ENCODE measurements at regions of chr20 and their contacts with region 1.

Region 1: DNA sequence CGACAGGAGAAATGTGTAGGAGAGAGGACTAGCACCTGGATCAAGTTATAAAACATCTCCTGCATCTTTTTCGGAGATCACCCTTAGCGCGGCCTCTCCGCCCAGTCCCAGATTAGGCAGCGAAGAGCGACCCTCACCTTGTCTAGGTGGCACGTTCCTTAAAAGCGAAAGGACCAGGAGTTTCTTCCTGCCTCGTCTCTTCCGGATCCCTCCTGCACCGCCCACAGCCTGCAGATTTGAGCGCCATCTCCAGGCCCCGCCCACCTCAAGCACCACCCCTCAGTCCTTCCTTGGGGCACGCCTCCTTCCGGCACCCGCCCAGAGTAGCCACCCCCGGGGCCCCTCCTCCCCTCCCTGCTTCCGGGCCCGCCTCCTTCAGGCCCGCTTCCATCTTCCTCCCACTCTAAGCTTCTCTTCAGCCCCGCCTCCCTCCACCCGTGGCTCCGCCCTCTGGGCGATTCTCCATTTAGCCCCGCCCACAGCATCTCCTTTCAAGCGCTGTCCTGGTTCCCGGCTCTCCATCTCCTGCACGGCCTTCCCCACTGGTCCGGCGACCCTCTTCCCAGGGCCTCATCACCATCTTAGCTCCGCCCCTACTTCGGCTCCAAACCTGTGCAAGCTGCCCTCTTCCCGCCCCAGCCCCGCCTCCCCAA is 662 bp upstream of the RALY start:
- DNase-seq: peak; percentile 99 to 100 (median 99)
- ATAC-seq: peak; percentile 82
- H3K4me3 ChIP-seq: peak overlapping the region; percentile 97
- H3K4me3 Mint-ChIP-seq: peak overlapping the region; percentile 100
- H3K27ac ChIP-seq: peak overlapping the region; percentile 91 to 92
- H3K27ac Mint-ChIP-seq: peak overlapping the region; percentile 99
- H3K4me1 ChIP-seq: peaks cover 51% of the 10 kb centered on the region
- H3K4me1 Mint-ChIP-seq: peaks cover 68% of the 10 kb centered on the region
- H3K27me3 ChIP-seq: no peaks in the 10 kb centered on the region
- H3K27me3 Mint-ChIP-seq: no peaks in the 10 kb centered on the region
- CTCF ChIP-seq: no peak

Region 2: DNA sequence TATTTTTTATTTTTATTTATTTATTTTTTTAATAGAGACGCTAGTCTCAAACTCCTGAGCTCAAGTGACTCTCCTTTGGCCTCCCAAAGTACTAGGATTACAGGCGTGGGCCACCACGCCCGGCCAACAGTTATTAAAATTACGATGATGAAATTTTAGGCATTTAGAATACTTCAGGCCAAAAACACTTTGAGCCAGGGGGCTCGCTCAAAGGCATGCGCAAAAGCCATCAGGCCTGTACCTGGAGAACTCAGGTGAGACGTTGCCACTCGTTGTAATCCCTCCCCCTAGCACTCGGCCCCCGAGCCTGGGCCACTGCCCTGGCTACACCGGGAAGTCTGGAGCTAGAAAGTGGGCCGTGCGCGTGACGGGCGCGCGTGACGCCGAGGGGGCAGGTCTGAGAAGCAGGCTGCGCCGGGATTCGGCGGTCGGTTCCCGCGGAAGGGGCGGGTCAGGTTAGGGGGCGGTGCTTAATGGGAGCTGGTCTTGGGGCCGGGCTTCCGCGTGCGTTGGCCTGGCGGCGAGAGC is 503.5 kb before region 1 on chr20:
- CTCF ChIA-PET with region 1: no interaction called
- POLR2A ChIA-PET with region 1: interaction called, 19 read pairs
- intact Hi-C with region 1: loop called in 1 of 2 experiments (anchors 5 kb)
- DNase-seq: peak; percentile 97 to 100 (median 99)
- ATAC-seq: peak; percentile 96
- H3K4me3 ChIP-seq: peak overlapping the region; percentile 57
- H3K4me3 Mint-ChIP-seq: peak overlapping the region; percentile 94
- H3K27ac ChIP-seq: peak overlapping the region; percentile 92 to 95
- H3K27ac Mint-ChIP-seq: peak overlapping the region; percentile 96
- H3K4me1 ChIP-seq: peaks cover 26% of the 10 kb centered on the region
- H3K4me1 Mint-ChIP-seq: peaks cover 36% of the 10 kb centered on the region
- H3K27me3 ChIP-seq: no peaks in the 10 kb centered on the region
- H3K27me3 Mint-ChIP-seq: no peaks in the 10 kb centered on the region
- CTCF ChIP-seq: no peak

Region 3: GRCh38 chr20:33731693-33732165 is 261.3 kb before region 1 on chr20 and contains the start of gene ZNF341:
- CTCF ChIA-PET with region 1: no interaction called
- POLR2A ChIA-PET with region 1: interaction called, 15 read pairs
- intact Hi-C with region 1: loop called in 1 of 2 experiments (anchors 5 kb)
- DNase-seq: peak in 13 of 14 experiments; percentile 80 to 96 (median 87)
- ATAC-seq: peak; percentile 83
- H3K4me3 ChIP-seq: peak within 1 kb of the TSS; percentile 85
- H3K4me3 Mint-ChIP-seq: peak within 1 kb of the TSS; percentile 93
- H3K27ac ChIP-seq: peak within 1 kb of the TSS; percentile 57 to 70
- H3K27ac Mint-ChIP-seq: peak within 1 kb of the TSS; percentile 96
- H3K4me1 ChIP-seq: peaks cover 28% of the 10 kb centered on the region
- H3K4me1 Mint-ChIP-seq: peaks cover 22% of the 10 kb centered on the region
- H3K27me3 ChIP-seq: no peaks in the 10 kb centered on the region
- H3K27me3 Mint-ChIP-seq: no peaks in the 10 kb centered on the region
- CTCF ChIP-seq: peak; percentile 76
- total RNA-seq, gene ZNF341: 2.1 to 2.7 TPM

Region 4: GRCh38 chr20:34037121-34037520 is 44.1 kb after region 1 on chr20:
- CTCF ChIA-PET with region 1: no interaction called
- POLR2A ChIA-PET with region 1: interaction called, 7 read pairs
- intact Hi-C with region 1: loop called in 1 of 2 experiments (anchors 5 kb)
- DNase-seq: peak; percentile 16 to 68 (median 44)
- ATAC-seq: peak; percentile 97
- H3K4me3 ChIP-seq: no peak overlapping the region
- H3K4me3 Mint-ChIP-seq: peak overlapping the region; percentile 76
- H3K27ac ChIP-seq: no peak overlapping the region
- H3K27ac Mint-ChIP-seq: peak overlapping the region; percentile 55
- H3K4me1 ChIP-seq: peaks cover 34% of the 10 kb centered on the region
- H3K4me1 Mint-ChIP-seq: peaks cover 88% of the 10 kb centered on the region
- H3K27me3 ChIP-seq: no peaks in the 10 kb centered on the region
- H3K27me3 Mint-ChIP-seq: no peaks in the 10 kb centered on the region
- CTCF ChIP-seq: no peak

Region 5: DNA sequence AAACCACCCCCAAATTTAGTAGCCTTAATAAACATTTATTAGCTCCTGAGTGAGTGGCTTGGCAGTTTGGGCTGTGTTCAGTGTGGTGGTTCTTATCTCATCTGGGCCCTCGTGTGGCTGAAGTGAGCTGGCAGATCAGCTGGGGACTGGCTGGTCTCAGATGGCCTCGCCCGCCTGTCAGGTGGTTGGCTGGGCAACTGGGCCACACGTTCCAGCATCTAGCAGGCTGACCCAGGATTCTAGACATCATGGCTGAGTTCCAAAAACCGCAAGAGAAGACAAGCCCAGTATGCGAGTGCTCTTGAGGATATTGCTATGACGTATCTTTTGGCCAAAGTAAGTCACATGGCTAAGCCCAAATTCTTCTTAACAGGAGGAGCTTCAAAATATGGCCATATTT is 90.1 kb after region 1 on chr20:
- CTCF ChIA-PET with region 1: no interaction called
- POLR2A ChIA-PET with region 1: no interaction called
- intact Hi-C with region 1: no loop called
- DNase-seq: no peak
- ATAC-seq: no peak
- H3K4me3 ChIP-seq: no peak overlapping the region
- H3K4me3 Mint-ChIP-seq: no peak overlapping the region
- H3K27ac ChIP-seq: no peak overlapping the region
- H3K27ac Mint-ChIP-seq: peak overlapping the region; percentile 25
- H3K4me1 ChIP-seq: peaks cover 6% of the 10 kb centered on the region
- H3K4me1 Mint-ChIP-seq: peaks cover 21% of the 10 kb centered on the region
- H3K27me3 ChIP-seq: no peaks in the 10 kb centered on the region
- H3K27me3 Mint-ChIP-seq: no peaks in the 10 kb centered on the region
- CTCF ChIP-seq: no peak

Region 6: DNA sequence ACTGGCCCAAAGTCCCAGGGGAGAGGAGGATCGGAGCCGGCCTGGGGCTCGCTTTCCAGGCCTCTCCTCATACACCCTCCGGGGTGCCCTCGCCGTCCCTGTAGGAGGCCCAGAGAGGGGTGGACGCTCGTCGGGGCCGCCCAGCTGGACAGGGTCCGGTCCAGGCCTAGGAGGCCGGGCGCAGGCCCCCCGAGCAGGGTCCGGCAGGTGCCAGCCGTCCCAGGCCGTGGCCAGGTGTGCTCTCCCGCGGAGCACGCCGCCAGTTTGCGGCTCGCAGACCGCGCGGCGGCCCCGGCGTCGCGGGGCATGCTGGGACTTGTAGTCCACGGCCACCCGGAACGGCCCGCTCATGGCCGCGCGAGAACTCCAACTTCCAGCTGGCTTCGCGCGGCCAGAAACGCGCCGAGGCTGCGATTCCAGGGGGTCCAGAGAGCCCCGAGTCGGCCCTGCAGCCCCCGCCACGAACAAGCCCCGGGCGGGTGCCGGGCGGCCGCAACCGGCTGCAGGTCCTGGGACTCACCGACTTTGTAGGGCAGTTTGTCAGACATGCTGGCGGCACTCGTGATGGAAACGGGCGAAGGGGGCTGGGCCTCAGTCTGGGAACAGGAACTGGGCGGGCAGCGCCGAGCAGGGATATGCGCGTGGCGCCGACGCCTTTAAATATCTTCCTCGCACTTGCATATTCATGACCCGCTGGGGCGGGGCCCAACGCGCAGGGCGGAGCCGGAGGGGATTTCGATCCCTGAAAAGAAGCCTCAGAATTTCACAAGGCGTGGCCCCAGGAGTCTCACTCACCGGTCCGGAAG is 309.9 kb after region 1 on chr20 and contains the start of gene AHCY:
- CTCF ChIA-PET with region 1: no interaction called
- POLR2A ChIA-PET with region 1: interaction called, 3 read pairs
- intact Hi-C with region 1: loop called in 1 of 2 experiments (anchors 5 kb)
- DNase-seq: peak; percentile 78 to 96 (median 87)
- ATAC-seq: peak; percentile 94
- H3K4me3 ChIP-seq: peak within 1 kb of the TSS; percentile 82
- H3K4me3 Mint-ChIP-seq: peak within 1 kb of the TSS; percentile 98
- H3K27ac ChIP-seq: peak within 1 kb of the TSS; percentile 65 to 84
- H3K27ac Mint-ChIP-seq: peak within 1 kb of the TSS; percentile 91
- H3K4me1 ChIP-seq: peaks cover 17% of the 10 kb centered on the region
- H3K4me1 Mint-ChIP-seq: peaks cover 11% of the 10 kb centered on the region
- H3K27me3 ChIP-seq: no peaks in the 10 kb centered on the region
- H3K27me3 Mint-ChIP-seq: no peaks in the 10 kb centered on the region
- CTCF ChIP-seq: no peak
- total RNA-seq, gene AHCY: 16.7 to 16.9 TPM

Region 7: DNA sequence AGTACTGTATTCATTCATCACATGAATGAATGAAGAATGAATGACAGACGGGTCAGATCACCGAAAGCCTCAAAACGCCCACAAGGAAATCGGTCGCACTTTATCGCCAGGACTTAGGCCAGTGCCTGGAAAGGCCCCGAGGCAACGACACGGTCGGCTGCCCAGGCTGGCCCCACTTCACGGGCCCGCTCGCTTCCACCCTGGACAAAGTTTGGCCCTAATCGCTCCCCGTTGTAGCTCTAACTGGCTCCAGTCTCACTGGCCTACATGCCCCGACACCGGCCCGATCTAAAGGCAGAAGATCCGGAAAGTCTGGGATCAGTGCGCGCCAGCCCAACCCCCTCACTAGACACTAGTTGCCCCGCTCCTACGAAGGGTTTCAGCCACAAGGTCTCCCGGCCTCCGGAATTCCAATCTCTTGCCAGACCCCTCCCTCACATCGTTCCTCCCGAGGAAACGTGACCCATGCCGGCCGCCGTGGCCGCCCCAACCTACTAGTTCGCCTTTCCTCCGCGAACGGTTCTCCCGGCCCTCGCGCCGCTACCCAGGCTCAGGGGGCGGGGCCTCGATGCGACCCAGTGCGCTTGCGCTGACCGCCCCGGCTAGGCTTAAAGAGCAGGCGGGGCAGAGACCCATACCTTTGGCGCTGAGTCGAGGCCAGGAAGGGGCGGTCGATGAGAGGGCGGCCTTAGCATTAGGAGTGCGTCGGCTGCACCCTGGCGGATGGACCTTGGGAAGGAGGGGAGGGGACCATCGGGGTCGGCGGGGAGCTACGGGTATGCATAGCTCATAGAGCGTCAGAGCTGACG is 962.4 kb after region 1 on chr20 and contains the starts of genes GSS and MYH7B:
- CTCF ChIA-PET with region 1: no interaction called
- POLR2A ChIA-PET with region 1: no interaction called
- intact Hi-C with region 1: loop called in 1 of 2 experiments (anchors 10 kb)
- DNase-seq: peak; percentile 90 to 98 (median 96)
- ATAC-seq: peak; percentile 92
- H3K4me3 ChIP-seq: peak within 1 kb of the TSS; percentile 87
- H3K4me3 Mint-ChIP-seq: peak within 1 kb of the TSS; percentile 94
- H3K27ac ChIP-seq: peak within 1 kb of the TSS; percentile 62 to 70
- H3K27ac Mint-ChIP-seq: peak within 1 kb of the TSS; percentile 91
- H3K4me1 ChIP-seq: peaks cover 19% of the 10 kb centered on the region
- H3K4me1 Mint-ChIP-seq: peaks cover 23% of the 10 kb centered on the region
- H3K27me3 ChIP-seq: no peaks in the 10 kb centered on the region
- H3K27me3 Mint-ChIP-seq: no peaks in the 10 kb centered on the region
- CTCF ChIP-seq: no peak
- total RNA-seq, gene GSS: 24.3 to 24.7 TPM
- total RNA-seq, gene MYH7B: 0.53 to 0.58 TPM